ENCODE measurements at regions of chr3 and their contacts with region 1.

Region 1: GRCh38 chr3:196739671-196740480 is at the start of gene PAK2:
- DNase-seq: peak; percentile 89 to 90
- H3K4me3 ChIP-seq: peak within 1 kb of the TSS; percentile 88
- H3K4me3 Mint-ChIP-seq: peak within 1 kb of the TSS; percentile 93
- H3K27ac Mint-ChIP-seq: peak within 1 kb of the TSS; percentile 98
- H3K4me1 ChIP-seq: no peaks in the 10 kb centered on the region; the same call in 1 of the 2 replicates
- H3K4me1 Mint-ChIP-seq: peaks cover 14% of the 10 kb centered on the region
- H3K27me3 ChIP-seq: no peaks in the 10 kb centered on the region; the same call in 1 of the 2 replicates
- H3K27me3 Mint-ChIP-seq: no peaks in the 10 kb centered on the region
- CTCF ChIP-seq: no peak
- total RNA-seq, gene PAK2: 73.7 and 89.6 TPM in 2 replicates

Region 2: DNA sequence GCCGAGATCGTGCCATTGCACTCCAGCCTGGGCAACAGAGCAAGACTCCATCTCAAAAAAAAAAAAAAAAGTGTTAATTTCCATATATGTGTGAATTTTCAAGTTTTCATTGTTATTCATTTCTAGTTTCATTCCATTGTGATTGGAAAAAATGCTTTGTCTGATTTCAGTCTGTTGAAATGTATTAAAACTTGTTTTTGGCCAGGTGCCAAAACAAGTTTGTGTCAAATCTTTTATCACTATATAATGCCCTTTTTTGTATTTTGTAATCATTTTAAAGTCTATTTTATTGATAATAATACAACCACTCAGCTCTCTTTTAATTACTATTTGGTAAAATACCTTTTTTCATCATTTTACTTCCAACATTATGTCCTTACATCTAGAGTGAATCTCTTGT is 700.5 kb before region 1 on chr3:
- CTCF ChIA-PET with region 1: no interaction called
- POLR2A ChIA-PET with region 1: no interaction called
- intact Hi-C with region 1: no loop called
- DNase-seq: no peak
- H3K4me3 ChIP-seq: no peak overlapping the region
- H3K4me3 Mint-ChIP-seq: no peak overlapping the region
- H3K27ac Mint-ChIP-seq: no peak overlapping the region
- H3K4me1 ChIP-seq: no peaks in the 10 kb centered on the region
- H3K4me1 Mint-ChIP-seq: no peaks in the 10 kb centered on the region
- H3K27me3 ChIP-seq: no peaks in the 10 kb centered on the region
- H3K27me3 Mint-ChIP-seq: no peaks in the 10 kb centered on the region
- CTCF ChIP-seq: no peak

Region 3: GRCh38 chr3:196711838-196712513 is 27.9 kb before region 1 on chr3 and contains the starts of genes CEP19 and PIGX:
- CTCF ChIA-PET with region 1: no interaction called
- POLR2A ChIA-PET with region 1: interaction called, 12 read pairs
- intact Hi-C with region 1: loop called (anchors 1 kb)
- DNase-seq: peak; percentile 76 to 89
- H3K4me3 ChIP-seq: peak within 1 kb of the TSS; percentile 90
- H3K4me3 Mint-ChIP-seq: peak within 1 kb of the TSS; percentile 87
- H3K27ac Mint-ChIP-seq: peak within 1 kb of the TSS; percentile 90
- H3K4me1 ChIP-seq: no peaks in the 10 kb centered on the region
- H3K4me1 Mint-ChIP-seq: no peaks in the 10 kb centered on the region
- H3K27me3 ChIP-seq: no peaks in the 10 kb centered on the region
- H3K27me3 Mint-ChIP-seq: no peaks in the 10 kb centered on the region
- CTCF ChIP-seq: no peak
- total RNA-seq, gene CEP19: 1.6 and 1.7 TPM in 2 replicates
- total RNA-seq, gene PIGX: 24.6 and 31.1 TPM in 2 replicates

Region 4: DNA sequence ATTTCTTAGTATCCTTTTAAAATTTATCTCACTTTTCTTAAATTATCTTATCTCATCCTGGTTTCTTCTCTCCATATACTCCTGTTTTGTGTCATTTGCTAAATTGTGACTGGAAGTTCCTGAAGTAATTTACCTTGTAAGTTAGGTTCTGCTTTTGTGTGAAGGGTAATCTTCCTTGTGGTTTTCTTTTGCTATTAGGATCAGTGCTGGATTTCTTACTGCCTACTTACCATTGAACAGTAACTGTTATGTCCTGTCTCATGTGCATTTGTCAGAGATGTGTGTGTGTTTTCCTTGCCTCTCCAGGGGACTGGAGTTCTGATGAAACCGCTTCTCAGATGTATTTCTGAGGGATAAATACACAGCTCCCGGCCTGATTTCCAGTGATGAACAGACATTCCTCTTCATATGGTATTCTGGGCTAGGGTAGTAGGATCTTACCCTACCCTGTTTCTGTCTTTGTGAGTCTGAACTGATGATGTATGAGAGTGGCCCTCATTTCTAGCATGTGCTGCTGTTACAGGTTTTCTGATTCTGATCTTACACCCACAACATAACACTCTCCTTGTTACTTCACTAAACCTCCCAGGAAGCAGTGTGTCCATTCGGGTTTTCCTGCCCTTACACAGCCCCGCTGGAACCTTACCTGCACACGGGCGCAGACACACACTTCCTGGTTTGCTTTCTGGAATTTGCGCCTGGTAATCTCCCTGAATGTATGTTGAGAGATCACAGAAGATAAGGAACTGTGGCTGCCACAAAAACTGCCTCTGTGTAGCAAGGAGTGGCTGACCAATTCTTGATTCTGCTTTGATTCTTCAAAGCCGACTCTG is 14.4 kb after region 1 on chr3:
- CTCF ChIA-PET with region 1: no interaction called
- POLR2A ChIA-PET with region 1: interaction called, 5 read pairs
- intact Hi-C with region 1: loop called (anchors 1 kb)
- DNase-seq: peak; percentile 74 to 78
- H3K4me3 ChIP-seq: peak overlapping the region; percentile 21
- H3K4me3 Mint-ChIP-seq: peak overlapping the region; percentile 68
- H3K27ac Mint-ChIP-seq: peak overlapping the region; percentile 88
- H3K4me1 ChIP-seq: peaks cover 36% of the 10 kb centered on the region
- H3K4me1 Mint-ChIP-seq: peaks cover 25% of the 10 kb centered on the region
- H3K27me3 ChIP-seq: no peaks in the 10 kb centered on the region
- H3K27me3 Mint-ChIP-seq: no peaks in the 10 kb centered on the region
- CTCF ChIP-seq: no peak

Region 5: DNA sequence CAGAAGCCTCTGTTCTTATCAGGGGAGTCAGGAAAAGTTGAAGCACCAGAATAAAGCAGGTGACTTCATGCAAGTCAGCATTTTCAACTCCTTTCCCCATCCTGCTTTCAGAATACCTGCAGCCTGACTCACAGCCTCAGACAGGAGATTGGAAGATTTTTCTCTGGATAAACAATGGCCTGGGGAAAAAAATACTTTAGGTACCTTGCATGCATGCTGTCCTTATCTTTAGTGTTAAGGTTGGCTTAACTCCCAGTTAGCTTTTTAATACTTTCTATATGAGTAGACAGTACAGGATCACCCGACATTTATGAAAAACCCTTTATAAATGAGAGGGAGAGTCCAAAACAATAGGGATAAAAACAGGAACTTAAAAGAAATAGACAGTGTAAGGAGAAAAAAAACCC is 53.4 kb after region 1 on chr3:
- CTCF ChIA-PET with region 1: interaction called, 8 read pairs
- POLR2A ChIA-PET with region 1: interaction called, 13 read pairs
- intact Hi-C with region 1: loop called (anchors 1 kb)
- DNase-seq: peak; percentile 78 to 82
- H3K4me3 ChIP-seq: no peak overlapping the region
- H3K4me3 Mint-ChIP-seq: peak overlapping the region; percentile 49
- H3K27ac Mint-ChIP-seq: peak overlapping the region; percentile 80
- H3K4me1 ChIP-seq: peaks cover 67% of the 10 kb centered on the region
- H3K4me1 Mint-ChIP-seq: peaks cover 37% of the 10 kb centered on the region
- H3K27me3 ChIP-seq: no peaks in the 10 kb centered on the region
- H3K27me3 Mint-ChIP-seq: no peaks in the 10 kb centered on the region
- CTCF ChIP-seq: no peak